Psoas muscle (tissue), 8 donors: ENCODE measurements at regions of chr16 and their contacts with region 1.

Region 1: DNA sequence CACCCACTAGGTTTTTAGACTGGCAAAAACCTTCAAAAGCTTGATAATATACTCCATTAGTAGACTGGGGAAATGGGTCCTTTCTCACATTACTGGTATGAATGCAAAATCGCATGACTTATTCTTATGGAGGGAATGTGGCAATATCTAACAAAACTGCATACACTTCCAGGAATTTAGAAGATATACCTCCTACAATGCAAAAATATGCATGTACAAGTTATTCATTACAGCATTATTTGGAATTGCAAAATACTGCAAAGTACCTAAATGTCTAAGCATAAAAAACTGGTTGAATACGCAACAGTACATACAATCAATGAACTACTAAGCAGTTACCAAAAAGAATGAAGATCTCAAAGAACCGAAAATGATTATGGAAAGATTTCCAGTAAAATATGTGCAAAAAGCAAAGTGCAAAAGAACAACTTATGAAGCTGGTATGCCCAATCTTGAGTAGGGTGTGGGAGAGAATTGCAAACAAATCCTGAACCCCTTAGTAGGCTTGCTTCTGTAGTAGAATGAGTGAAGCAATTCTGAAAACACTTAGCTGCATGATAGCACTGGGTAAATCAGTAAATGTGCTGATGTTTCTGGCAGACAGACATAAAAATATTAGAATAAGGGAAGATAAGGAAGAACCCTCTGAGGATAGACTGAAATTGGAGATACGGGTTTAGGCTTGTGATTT is 180.1 kb downstream of the PARN start:
- DNase-seq: no peak
- ATAC-seq: no peak
- H3K4me3 ChIP-seq: no peak overlapping the region
- H3K27ac ChIP-seq: no peak overlapping the region
- H3K4me1 ChIP-seq: no peaks in the 10 kb centered on the region
- H3K27me3 ChIP-seq: no peaks in the 10 kb centered on the region
- CTCF ChIP-seq: no peak

Region 2: DNA sequence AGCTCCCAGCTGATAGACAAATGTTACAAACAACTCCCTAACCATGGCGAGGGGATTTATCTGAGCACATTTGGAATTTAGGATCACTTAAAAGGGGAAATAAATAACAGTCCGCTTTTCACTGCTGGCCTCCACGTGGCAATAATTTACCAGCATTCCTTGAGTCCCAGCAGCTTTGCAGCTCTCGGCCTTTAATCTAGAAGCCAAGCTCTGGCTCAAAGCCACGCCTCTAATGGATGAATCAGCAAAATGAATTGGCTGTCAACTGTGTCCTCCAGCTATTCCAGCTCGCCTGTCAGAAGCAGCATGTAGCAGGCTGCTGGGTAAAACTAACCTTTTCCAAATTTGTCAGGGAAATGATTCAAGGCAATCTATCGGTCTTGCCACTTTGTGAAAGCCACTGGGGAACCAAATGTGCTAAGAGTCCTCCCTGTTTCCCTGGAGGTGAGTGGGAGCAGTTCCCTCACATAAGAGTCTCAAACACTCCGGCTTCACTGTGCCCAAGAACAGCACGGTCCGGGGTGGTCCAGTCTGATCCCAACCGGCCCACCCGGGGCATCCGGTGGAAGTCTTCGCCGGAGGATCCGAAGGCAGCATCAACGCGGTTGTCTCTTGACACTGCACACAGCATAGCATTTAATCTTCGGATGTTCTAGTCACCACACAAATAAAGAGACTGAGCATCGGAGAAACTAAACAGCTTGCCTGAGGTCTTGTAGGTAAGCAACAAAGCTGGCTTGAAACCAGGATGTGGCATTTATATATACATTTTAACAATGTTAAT is 36.8 kb after region 1 on chr16:
- intact Hi-C with region 1: loop called in 1 of 2 experiments (anchors 5 kb)
- DNase-seq: peak; percentile 76 to 86
- ATAC-seq: peak; percentile 73 to 84 (median 80)
- H3K4me3 ChIP-seq: peak overlapping the region; percentile 75
- H3K27ac ChIP-seq: peak overlapping the region; percentile 92
- H3K4me1 ChIP-seq: peaks cover 27% of the 10 kb centered on the region
- H3K27me3 ChIP-seq: no peaks in the 10 kb centered on the region
- CTCF ChIP-seq: no peak